Heart right ventricle (tissue), 16 donors: ENCODE measurements at regions of chr14 and their contacts with region 1.

Region 1: GRCh38 chr14:57317316-57317715 is 48.5 kb downstream of the AP5M1 start:
- DNase-seq: peak; percentile 25 to 72
- ATAC-seq: peak in 1 of 8 donors; percentile 53
- H3K4me3 ChIP-seq: no peak overlapping the region
- H3K27ac ChIP-seq: no peak overlapping the region
- H3K4me1 ChIP-seq: no peaks in the 10 kb centered on the region
- H3K27me3 ChIP-seq: peaks cover 0 to 20% (median 13%) of the 10 kb centered on the region in 7 donors
- CTCF ChIP-seq: peak; percentile 57 to 92 (median 90)

Region 2: GRCh38 chr14:56491299-56492285 is 825.7 kb before region 1 on chr14:
- intact Hi-C with region 1: loop called (anchors 1 to 10 kb)
- DNase-seq: peak in 1 of 2 donors; percentile 25
- ATAC-seq: peak in 6 of 8 donors; percentile 35 to 57 (median 44)
- H3K4me3 ChIP-seq: no peak overlapping the region
- H3K27ac ChIP-seq: no peak overlapping the region
- H3K4me1 ChIP-seq: peaks cover 0 to 12% (median 0%) of the 10 kb centered on the region in 9 donors
- H3K27me3 ChIP-seq: no peaks in the 10 kb centered on the region
- CTCF ChIP-seq: peak; percentile 42 to 77 (median 71)

Region 3: DNA sequence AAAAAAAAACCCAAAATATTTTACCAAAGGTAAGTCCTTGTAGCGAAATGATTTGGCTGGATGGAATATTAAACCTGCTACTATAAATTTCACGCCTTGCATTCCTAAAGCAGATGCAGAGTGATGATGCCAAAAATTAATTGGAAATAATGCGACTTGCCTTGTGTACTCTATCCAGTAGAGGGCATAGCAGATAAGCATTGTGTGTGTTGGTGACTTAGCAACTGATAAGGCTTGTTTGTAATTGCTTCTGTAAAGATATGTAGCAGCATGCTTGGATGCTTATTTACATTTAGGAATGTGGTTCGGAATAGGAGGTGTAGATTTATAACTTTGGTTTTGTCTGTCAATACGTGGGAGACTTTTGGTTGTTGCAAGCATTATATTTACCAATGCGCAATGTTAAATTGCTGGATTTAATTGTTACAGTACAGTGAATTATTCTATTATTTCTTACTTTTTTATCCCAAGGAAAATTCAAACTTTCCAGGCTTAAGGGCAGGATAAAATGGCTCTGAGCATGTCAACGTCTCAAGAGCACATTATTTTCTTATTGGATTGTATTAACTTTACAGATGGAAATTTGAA is 657.3 kb before region 1 on chr14:
- intact Hi-C with region 1: loop called in 2 of 10 experiments (anchors 5 to 10 kb)
- DNase-seq: no peak
- ATAC-seq: peak in 1 of 8 donors; percentile 45
- H3K4me3 ChIP-seq: no peak overlapping the region
- H3K27ac ChIP-seq: no peak overlapping the region
- H3K4me1 ChIP-seq: no peaks in the 10 kb centered on the region
- H3K27me3 ChIP-seq: peaks cover 0 to 15% (median 0%) of the 10 kb centered on the region in 7 donors
- CTCF ChIP-seq: peak in 8 of 9 donors; percentile 11 to 57 (median 44)

Region 4: DNA sequence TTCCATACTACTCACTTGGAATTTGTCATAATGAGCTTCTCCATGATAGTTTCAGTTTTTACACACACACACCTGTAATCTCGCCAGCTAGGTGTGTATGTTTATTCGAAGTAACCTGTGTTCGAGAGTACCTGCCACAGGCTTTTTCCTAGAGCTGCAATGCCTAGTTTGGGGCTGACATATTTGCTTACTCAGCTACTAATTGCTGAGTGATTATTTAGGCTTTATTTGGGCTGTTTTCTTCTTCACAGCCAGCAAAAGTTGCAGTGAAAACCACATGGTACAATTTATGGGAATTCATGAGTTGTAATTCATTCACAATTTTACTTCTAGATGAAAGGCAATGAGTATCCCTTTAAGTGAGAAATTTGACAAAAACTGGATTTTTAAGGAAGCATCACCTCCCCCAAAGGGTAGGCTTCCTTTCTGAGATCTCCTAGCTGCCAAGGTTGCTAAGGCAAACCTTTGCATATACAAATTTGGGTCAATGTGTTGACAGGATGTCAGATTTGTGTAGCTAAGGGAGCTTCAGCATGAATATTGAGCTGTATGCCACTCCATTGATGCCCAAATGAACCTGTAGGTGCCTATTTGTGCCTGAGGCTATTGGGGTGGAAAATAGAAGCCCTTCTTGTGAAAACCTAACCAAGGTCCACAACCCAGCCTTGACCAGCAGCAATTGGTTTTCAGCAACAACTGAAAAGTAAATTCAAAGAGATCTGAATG is 398.3 kb before region 1 on chr14:
- intact Hi-C with region 1: no loop called
- DNase-seq: no peak
- ATAC-seq: no peak
- H3K4me3 ChIP-seq: no peak overlapping the region
- H3K27ac ChIP-seq: no peak overlapping the region
- H3K4me1 ChIP-seq: no peaks in the 10 kb centered on the region
- H3K27me3 ChIP-seq: peaks cover 0 to 21% (median 0%) of the 10 kb centered on the region in 7 donors
- CTCF ChIP-seq: no peak

Region 5: DNA sequence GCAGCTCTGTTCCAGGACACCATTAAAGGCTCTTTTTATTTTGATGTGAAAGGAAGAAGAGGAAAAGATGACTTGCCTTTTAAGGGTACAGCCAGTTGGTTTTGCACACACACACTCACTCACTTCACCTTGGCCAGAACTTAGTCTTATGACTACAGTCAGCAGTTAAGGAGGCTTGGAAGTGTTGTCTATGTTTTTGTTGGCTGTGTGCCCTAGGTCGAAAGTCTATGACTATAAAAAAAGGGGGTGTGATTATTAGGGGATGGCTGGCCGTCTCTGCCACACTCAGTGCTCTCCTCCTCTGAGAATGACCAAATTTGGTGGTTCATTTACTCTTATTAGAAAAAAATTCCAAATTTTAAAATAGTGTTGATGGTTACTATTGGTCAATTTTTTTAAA is 367.5 kb before region 1 on chr14:
- intact Hi-C with region 1: no loop called
- DNase-seq: no peak
- ATAC-seq: no peak
- H3K4me3 ChIP-seq: no peak overlapping the region
- H3K27ac ChIP-seq: no peak overlapping the region
- H3K4me1 ChIP-seq: no peaks in the 10 kb centered on the region
- H3K27me3 ChIP-seq: peaks cover 0 to 36% (median 5%) of the 10 kb centered on the region in 7 donors
- CTCF ChIP-seq: no peak

Region 6: DNA sequence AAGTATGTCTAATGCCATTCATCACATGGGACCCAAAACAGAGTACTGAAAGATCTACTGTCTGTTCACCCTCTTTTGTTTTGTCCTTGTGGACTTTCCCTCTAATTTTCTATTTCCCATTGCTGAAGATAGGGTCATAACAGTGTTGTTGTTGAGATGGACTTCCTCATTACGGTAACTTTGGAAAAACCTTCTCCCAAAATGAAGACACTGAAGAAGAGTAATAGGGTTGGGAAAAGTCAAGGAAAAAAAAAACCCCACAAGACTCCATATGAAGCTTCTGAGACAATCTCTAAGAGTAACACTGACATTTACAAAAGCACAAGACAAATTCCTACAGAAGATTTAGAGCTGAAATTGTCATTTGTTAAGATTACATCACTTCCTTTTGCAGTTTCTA is 85.3 kb before region 1 on chr14:
- intact Hi-C with region 1: no loop called
- DNase-seq: no peak
- ATAC-seq: no peak
- H3K4me3 ChIP-seq: no peak overlapping the region
- H3K27ac ChIP-seq: no peak overlapping the region
- H3K4me1 ChIP-seq: no peaks in the 10 kb centered on the region
- H3K27me3 ChIP-seq: no peaks in the 10 kb centered on the region
- CTCF ChIP-seq: no peak

Region 7: GRCh38 chr14:57686304-57686703 is 369.0 kb after region 1 on chr14:
- intact Hi-C with region 1: no loop called
- DNase-seq: no peak
- ATAC-seq: no peak
- H3K4me3 ChIP-seq: no peak overlapping the region
- H3K27ac ChIP-seq: no peak overlapping the region
- H3K4me1 ChIP-seq: no peaks in the 10 kb centered on the region
- H3K27me3 ChIP-seq: peaks cover 0 to 7% (median 0%) of the 10 kb centered on the region in 7 donors
- CTCF ChIP-seq: no peak